ENCODE measurements at regions of chr14 and their contacts with region 1.

Region 1: GRCh38 chr14:97218274-97218673 is 421.1 kb downstream of the VRK1 start:
- DNase-seq: no peak
- ATAC-seq: no peak
- H3K4me3 ChIP-seq: no peak overlapping the region
- H3K27ac ChIP-seq: no peak overlapping the region
- H3K4me1 ChIP-seq: no peaks in the 10 kb centered on the region
- H3K27me3 ChIP-seq: 0 out of 2 replicates have a peak, but pooled peaks cover 4% of the 10 kb centered on the region
- CTCF ChIP-seq: no peak

Region 2: DNA sequence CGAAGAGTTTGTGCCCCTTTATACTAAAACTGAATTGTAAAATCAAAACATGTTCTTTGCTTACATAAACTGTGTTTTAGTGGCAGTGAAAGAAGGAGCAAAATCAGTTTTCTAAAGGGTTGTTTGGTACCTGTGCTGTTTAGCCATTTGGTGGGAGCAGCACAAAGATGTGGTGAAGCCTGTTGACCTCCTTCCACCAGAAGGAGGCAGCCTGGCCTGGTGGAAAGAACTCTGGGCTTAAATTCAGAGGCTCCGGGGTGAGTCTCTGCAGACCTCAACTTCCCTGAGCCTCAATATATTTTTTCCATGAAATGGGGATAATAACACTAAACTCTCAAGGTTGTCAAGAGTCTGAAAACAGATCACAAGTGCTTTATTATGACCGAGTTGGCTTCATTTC is 81.4 kb after region 1 on chr14:
- CTCF ChIA-PET with region 1: interaction called, 10 read pairs
- POLR2A ChIA-PET with region 1: no interaction called
- in situ Hi-C with region 1: no loop called
- intact Hi-C with region 1: no loop called
- DNase-seq: no peak
- ATAC-seq: no peak
- H3K4me3 ChIP-seq: no peak overlapping the region
- H3K27ac ChIP-seq: no peak overlapping the region
- H3K4me1 ChIP-seq: no peaks in the 10 kb centered on the region
- H3K27me3 ChIP-seq: peaks cover 2% of the 10 kb centered on the region; the same call in 1 of the 2 replicates
- CTCF ChIP-seq: peak; percentile 13; the same call in 1 of the 2 replicates